Activated T-helper 1 cell treated with anti-CD3 and anti-CD28 coated beads, Interleukin-12 subunit alpha, Interleukin-12 subunit beta, Interleukin-2, Interleukin-4 antibody, amounts not matched to agents 30 ng/mL and 10 ng/mL and 1 ng/mL, durations not matched to agents 14 hours and 24 hours and 36 hours (primary cell): ENCODE measurements at regions of chr15 and their contacts with region 1.

Region 1: GRCh38 chr15:69475769-69476358 is 23.2 kb downstream of the RPLP1 start:
- DNase-seq: peak; percentile 55
- H3K4me3 Mint-ChIP-seq: no peak overlapping the region
- H3K27ac Mint-ChIP-seq: no peak overlapping the region
- H3K4me1 Mint-ChIP-seq: no peaks in the 10 kb centered on the region
- H3K27me3 Mint-ChIP-seq: peaks cover 23% of the 10 kb centered on the region

Region 2: GRCh38 chr15:70362886-70363285 is 887.0 kb after region 1 on chr15:
- intact Hi-C with region 1: no loop called
- DNase-seq: no peak
- H3K4me3 Mint-ChIP-seq: no peak overlapping the region
- H3K27ac Mint-ChIP-seq: no peak overlapping the region
- H3K4me1 Mint-ChIP-seq: no peaks in the 10 kb centered on the region
- H3K27me3 Mint-ChIP-seq: peaks cover 22% of the 10 kb centered on the region

Region 3: DNA sequence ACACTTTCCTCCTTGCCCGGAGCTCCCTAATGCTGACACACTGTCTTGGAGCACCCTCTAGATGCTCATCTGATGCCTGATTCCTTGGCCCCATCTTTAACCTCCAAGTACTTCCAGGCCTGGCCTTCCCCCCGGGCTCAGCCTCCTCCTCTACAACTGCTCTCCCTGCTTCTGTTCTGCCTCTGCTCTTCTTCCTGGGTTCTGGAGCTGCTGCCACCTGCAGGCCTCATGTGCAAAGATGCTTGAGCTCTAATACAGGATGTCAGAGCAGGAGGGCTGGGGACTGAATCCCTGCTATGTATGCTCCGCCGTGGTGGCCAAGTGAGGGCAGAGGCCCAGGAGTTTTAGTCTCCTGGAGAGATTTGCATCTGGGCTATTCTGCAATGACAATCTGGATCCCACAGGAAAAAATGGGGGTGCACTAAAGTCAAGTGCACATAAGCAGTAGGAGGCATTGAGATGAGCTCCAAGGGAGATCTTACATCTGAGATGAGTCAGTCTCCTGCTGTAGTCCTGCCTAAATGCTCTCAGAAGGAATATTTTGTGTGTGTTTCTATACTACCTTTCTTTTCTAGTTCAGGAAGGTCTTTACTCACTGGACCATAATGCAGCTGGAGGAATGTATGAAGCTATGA is 991.1 kb after region 1 on chr15:
- intact Hi-C with region 1: loop called (anchors 1 kb)
- DNase-seq: peak; percentile 41
- H3K4me3 Mint-ChIP-seq: no peak overlapping the region
- H3K27ac Mint-ChIP-seq: no peak overlapping the region
- H3K4me1 Mint-ChIP-seq: peaks cover 7% of the 10 kb centered on the region
- H3K27me3 Mint-ChIP-seq: peaks cover 71% of the 10 kb centered on the region

Region 4: GRCh38 chr15:70722266-70723121 is 1246.6 kb after region 1 on chr15:
- intact Hi-C with region 1: loop called (anchors 10 kb)
- DNase-seq: no peak
- H3K4me3 Mint-ChIP-seq: no peak overlapping the region
- H3K27ac Mint-ChIP-seq: no peak overlapping the region
- H3K4me1 Mint-ChIP-seq: no peaks in the 10 kb centered on the region
- H3K27me3 Mint-ChIP-seq: peaks cover 21% of the 10 kb centered on the region

Region 5: DNA sequence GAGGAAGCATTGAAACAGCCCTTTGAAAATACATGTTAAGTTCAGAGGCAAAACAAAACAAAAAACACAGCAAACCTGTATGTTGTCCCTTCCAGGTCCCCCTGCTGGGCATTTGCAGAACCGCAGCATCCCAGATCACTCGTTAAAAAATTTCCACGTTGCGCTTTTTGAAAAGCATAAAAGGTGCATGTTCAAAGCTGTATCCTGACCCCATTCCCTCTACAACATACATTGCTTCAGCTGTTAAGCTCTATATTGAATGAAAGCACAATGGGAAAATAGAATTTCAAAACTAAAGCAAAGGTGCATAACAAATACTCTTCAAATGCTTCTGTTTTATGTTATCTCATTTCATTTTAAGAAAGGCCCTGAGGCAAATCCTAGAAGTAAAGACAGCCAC is 1967.7 kb after region 1 on chr15:
- intact Hi-C with region 1: loop called (anchors 5 kb)
- DNase-seq: no peak
- H3K4me3 Mint-ChIP-seq: no peak overlapping the region
- H3K27ac Mint-ChIP-seq: no peak overlapping the region
- H3K4me1 Mint-ChIP-seq: no peaks in the 10 kb centered on the region
- H3K27me3 Mint-ChIP-seq: no peaks in the 10 kb centered on the region